ENCODE measurements at regions of chr11 and their contacts with region 1.

Region 1: GRCh38 chr11:66081505-66081904 is 11.4 kb downstream of the PACS1 start:
- DNase-seq: peak; percentile 86
- H3K4me3 Mint-ChIP-seq: peak overlapping the region; percentile 73
- H3K27ac Mint-ChIP-seq: peak overlapping the region; percentile 95
- H3K4me1 Mint-ChIP-seq: peaks cover 88% of the 10 kb centered on the region
- H3K27me3 Mint-ChIP-seq: no peaks in the 10 kb centered on the region

Region 2: GRCh38 chr11:66100272-66101065 is 19.0 kb after region 1 on chr11:
- CTCF ChIA-PET with region 1: interaction called, 3 read pairs
- POLR2A ChIA-PET with region 1: interaction called, 3 read pairs
- intact Hi-C with region 1: loop called (anchors 1 kb)
- DNase-seq: peak; percentile 77
- H3K4me3 Mint-ChIP-seq: peak overlapping the region; percentile 66
- H3K27ac Mint-ChIP-seq: peak overlapping the region; percentile 90
- H3K4me1 Mint-ChIP-seq: peaks cover 64% of the 10 kb centered on the region
- H3K27me3 Mint-ChIP-seq: no peaks in the 10 kb centered on the region

Region 3: GRCh38 chr11:66106786-66107599 is 25.5 kb after region 1 on chr11:
- CTCF ChIA-PET with region 1: no interaction called
- POLR2A ChIA-PET with region 1: interaction called, 3 read pairs
- intact Hi-C with region 1: loop called (anchors 2 kb)
- DNase-seq: peak; percentile 71
- H3K4me3 Mint-ChIP-seq: peak overlapping the region; percentile 0
- H3K27ac Mint-ChIP-seq: peak overlapping the region; percentile 77
- H3K4me1 Mint-ChIP-seq: peaks cover 78% of the 10 kb centered on the region
- H3K27me3 Mint-ChIP-seq: no peaks in the 10 kb centered on the region

Region 4: GRCh38 chr11:66136752-66137123 is 55.2 kb after region 1 on chr11:
- CTCF ChIA-PET with region 1: interaction called, 11 read pairs
- POLR2A ChIA-PET with region 1: no interaction called
- intact Hi-C with region 1: loop called (anchors 2 kb)
- DNase-seq: peak; percentile 48
- H3K4me3 Mint-ChIP-seq: no peak overlapping the region
- H3K27ac Mint-ChIP-seq: peak overlapping the region; percentile 65
- H3K4me1 Mint-ChIP-seq: peaks cover 65% of the 10 kb centered on the region
- H3K27me3 Mint-ChIP-seq: no peaks in the 10 kb centered on the region